GM10248 (cell line): ENCODE measurements at regions of chr17 and their contacts with region 1.

Region 1: DNA sequence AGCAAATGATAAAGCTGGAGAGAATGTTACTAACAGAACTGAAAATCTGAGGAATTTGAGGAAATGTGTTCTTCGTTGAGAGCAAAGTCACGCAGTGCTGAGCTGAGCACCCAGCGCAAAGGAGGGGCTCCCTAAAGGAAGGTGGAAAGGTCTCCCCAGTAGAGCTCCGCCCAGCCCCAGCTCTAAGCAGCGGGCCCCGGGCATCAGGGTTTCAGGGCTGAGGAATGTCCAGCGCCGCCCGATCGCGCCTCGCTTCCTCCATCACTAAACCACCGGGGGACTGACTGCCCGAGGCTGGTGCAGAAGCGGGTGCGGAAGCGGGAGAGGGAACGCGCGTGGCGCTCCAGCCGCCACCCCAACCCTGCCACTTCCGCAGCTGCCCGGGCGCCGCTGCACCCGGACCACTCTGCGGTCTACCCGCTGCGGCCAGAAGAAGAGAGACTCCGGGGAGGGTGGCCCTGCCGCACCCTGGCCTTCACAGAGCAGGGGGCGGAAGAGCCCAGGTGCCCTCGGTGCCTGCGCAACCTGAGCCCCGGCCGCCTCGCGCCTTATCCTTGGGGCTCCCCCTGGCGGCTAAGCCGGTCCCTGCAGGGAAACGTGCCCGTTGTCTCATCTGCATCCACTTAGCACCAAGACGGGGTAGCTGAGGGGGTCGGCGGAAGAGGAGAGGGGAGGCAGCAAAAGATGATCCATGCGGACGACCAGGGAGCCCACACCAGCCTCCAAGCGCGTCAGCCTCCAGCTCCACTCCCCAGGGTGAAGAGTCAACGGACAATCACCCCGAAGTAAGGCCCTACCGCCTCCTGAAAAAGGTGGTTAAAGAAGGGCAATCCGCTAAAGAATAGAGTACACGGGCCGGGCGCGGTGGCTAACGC is 12.4 kb upstream of the GUCY2D start:
- DNase-seq: peak; percentile 92
- CTCF ChIP-seq: peak; percentile 98

Region 2: DNA sequence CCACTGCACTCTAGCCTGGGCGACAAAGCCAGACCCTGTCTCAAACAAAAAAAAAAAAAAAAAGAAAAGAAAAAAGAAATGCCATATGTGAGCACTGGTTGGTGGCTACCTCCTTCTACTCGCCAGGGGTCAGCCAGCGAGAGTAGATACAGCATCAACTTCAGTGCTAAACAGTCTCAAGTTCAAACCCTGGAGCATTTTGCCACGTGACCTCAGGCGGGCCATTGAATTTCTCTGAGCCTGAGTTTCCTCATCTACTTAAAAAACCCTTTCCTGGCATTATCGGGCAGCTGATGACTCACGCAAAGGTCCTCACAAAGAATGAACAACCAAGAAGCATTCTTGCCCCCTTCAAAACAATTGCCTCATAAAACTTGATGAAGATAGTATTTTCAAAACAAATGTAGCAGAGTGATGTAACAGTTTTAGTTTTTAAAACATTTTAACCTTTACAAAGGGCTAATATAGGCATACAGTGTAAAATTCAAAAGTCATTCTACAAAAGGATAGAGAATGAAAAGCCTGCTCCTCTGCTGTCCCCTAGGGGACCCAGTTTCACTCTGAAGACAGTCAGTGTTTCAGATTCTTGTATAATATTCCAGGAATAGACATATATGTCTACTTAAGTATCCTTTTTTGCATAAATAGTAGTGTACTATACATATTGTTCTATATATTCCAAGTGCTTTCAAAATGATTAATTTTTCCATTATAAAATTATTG is 244.1 kb before region 1 on chr17:
- CTCF ChIA-PET with region 1: interaction called, 29 read pairs
- POLR2A ChIA-PET with region 1: no interaction called
- DNase-seq: no peak
- CTCF ChIP-seq: no peak

Region 3: DNA sequence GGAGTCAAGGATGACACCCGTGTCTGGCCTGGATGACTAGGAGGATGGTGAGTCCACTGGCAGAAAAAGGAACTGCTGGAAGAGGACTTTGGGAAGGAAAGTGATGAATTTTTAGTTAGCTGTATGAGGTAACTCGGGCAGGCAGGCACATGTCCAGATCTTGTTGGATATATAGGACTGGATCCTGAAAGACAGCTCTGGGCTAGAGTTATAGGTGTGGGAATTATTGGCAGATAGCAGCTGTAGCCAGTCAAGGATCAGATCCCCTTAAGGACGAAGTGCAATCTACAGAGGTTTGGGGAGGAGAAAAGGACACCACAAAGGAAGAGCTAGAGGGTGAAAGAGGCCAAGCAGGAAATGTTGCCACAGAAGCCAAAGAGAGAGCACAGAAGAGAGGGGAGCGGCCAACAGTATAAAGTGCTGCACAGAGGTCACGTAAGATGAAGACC is 122.1 kb before region 1 on chr17:
- CTCF ChIA-PET with region 1: interaction called, 121 read pairs
- POLR2A ChIA-PET with region 1: interaction called, 4 read pairs
- DNase-seq: no peak
- CTCF ChIP-seq: no peak

Region 4: GRCh38 chr17:7915611-7916382 is 74.2 kb before region 1 on chr17 and contains the start of gene RNF227:
- CTCF ChIA-PET with region 1: interaction called, 234 read pairs
- POLR2A ChIA-PET with region 1: no interaction called
- DNase-seq: peak; percentile 85
- CTCF ChIP-seq: no peak

Region 5: DNA sequence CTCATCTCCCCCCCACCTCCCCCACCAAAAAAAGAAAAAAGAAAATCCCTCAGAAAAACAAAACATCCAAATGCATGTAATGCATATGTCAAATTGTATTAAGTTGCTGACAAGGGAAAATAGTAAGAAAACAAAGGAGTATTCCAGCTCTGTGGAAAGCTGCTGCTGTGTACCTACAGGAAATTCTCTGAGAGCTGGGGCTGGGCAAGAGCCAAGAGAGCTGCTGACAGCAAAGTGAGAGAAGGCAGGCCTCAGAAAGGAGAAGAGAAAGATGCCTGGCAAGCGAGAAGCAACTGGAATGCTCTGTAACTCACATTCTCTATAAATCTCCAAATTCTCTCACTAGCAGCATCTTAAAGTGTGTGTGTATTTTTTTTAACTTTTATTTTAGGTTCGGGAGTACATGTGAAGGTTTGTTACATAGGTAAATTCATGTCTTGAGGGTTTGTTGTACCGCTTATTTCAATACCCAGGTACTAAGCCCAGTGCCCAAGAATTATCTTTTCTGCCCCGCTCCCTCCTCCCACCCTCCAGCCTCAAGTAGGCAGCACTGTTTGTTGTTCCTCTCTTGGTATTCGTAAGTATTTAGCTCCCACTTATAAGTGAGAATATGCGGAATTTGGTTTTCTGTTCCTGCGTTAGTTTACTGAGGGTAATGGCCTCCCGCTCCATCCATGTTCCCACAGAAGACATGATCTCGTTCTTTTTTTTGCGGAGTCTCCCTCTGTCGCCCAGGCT is 33.6 kb before region 1 on chr17:
- CTCF ChIA-PET with region 1: interaction called, 12 read pairs
- POLR2A ChIA-PET with region 1: no interaction called
- DNase-seq: no peak
- CTCF ChIP-seq: no peak

Region 6: GRCh38 chr17:8016632-8017478 is 26.8 kb after region 1 on chr17:
- CTCF ChIA-PET with region 1: interaction called, 33 read pairs
- POLR2A ChIA-PET with region 1: no interaction called
- DNase-seq: peak; percentile 55
- CTCF ChIP-seq: peak; percentile 72